Activated T-helper 2 cell treated with anti-CD3 and anti-CD28 coated beads, Interferon-gamma antibody, Interleukin-2, Interleukin-4, amounts not matched to agents 10 μg/mL and 5 μg/mL and 100 μg/mL, durations not matched to agents 14 hours and 24 hours and 36 hours (primary cell): ENCODE measurements at regions of chr17 and their contacts with region 1.

Region 1: GRCh38 chr17:48441231-48441711 is 11.3 kb upstream of the SKAP1 start:
- DNase-seq: peak; percentile 58
- H3K4me3 Mint-ChIP-seq: peak overlapping the region; percentile 24
- H3K27ac Mint-ChIP-seq: peak overlapping the region; percentile 79
- H3K4me1 Mint-ChIP-seq: peaks cover 82% of the 10 kb centered on the region
- H3K27me3 Mint-ChIP-seq: no peaks in the 10 kb centered on the region

Region 2: DNA sequence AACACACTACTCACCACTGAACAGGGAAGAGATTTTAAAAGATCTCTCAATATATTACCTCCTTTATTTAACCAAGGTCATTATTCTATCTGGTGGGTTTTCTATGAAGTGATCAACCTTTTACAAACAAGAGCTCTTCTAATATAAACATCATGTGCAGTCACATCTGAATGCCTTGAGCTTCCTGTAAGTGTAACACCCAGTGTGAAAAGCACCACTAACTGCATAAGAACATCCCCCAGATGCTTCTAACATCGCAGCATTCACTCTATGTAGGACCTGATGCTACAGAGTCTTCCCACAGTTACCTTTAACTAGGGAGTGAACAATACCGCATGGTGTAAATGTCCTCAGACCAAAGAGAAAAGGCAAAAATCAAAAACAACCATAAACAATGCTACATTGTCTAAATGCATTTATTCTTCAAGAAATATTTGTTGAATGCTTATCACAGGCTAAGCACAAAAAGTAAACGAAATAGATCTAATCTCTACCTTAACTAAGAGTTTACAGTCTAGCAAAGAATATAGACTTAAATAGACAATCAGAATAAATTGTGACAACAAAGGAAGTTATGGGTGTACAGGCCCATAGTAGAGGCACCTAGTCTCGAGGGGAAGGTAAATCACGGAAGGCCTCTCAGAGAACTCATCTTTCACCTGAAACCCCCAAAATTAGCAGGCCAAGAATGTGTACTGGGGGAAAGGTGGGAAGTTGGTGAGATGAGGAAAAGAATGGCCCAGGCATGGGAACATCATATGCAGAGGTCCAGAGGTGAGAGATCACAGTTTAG is 27.5 kb before region 1 on chr17:
- intact Hi-C with region 1: loop called (anchors 2 kb)
- DNase-seq: no peak
- H3K4me3 Mint-ChIP-seq: peak overlapping the region; percentile 19
- H3K27ac Mint-ChIP-seq: peak overlapping the region; percentile 86
- H3K4me1 Mint-ChIP-seq: peaks cover 66% of the 10 kb centered on the region
- H3K27me3 Mint-ChIP-seq: no peaks in the 10 kb centered on the region

Region 3: DNA sequence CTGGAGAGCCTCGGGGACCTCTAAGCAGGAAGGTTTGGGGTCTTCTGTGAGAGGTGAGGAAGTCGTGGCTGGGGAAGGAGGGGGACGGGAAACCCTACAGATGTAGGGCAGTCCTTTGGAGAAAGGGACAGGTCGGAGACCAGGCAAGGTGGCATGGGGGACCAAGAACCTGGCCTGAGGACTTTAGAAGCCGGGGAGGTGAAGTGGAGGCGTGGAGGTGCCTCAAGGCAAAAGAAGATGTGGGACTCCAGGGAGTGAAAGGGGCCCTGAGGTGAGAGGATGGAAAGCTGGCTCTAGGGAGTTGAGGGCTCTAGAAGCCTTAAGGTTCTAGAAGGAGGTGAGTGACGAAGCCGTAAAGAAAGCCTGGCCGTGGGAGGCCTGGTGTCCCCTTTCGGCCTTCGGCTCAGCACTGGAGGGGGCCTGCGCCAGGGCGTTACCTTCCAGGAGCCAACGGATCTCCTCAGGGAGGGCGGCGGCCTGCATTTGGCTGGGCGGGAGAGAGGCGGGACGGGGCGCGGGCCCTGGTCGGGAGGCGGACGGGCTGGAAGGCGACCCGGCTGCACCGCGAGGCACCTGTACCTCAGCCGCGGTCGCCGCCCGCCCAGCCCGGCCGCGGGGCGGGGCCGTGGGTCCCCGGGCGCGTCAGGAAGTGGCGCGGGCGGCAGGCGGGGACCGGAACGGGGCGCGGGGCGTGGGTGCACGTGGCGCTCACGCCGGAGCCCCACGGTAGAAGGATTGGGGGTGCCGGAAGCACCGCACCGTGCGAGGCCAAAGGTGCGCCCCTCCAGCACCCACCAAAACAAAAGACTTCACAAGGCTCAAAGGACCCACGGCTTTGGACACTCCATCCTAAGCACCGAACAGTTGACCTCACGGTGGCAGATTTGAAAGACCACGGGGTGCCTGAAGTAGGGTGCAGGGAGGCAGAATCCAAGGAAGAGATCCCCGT is 11.4 kb before region 1 on chr17 and contains the start of gene SKAP1:
- intact Hi-C with region 1: loop called (anchors 1 kb)
- DNase-seq: peak; percentile 68
- H3K4me3 Mint-ChIP-seq: peak within 1 kb of the TSS; percentile 97
- H3K27ac Mint-ChIP-seq: peak within 1 kb of the TSS; percentile 93
- H3K4me1 Mint-ChIP-seq: peaks cover 65% of the 10 kb centered on the region
- H3K27me3 Mint-ChIP-seq: no peaks in the 10 kb centered on the region
- total RNA-seq, gene SKAP1: 60.5 and 67.9 TPM in 2 replicates

Region 4: GRCh38 chr17:48483471-48484131 is 42.3 kb after region 1 on chr17:
- intact Hi-C with region 1: loop called (anchors 2 kb)
- DNase-seq: peak; percentile 33
- H3K4me3 Mint-ChIP-seq: no peak overlapping the region
- H3K27ac Mint-ChIP-seq: peak overlapping the region; percentile 18
- H3K4me1 Mint-ChIP-seq: peaks cover 40% of the 10 kb centered on the region
- H3K27me3 Mint-ChIP-seq: no peaks in the 10 kb centered on the region

Region 5: DNA sequence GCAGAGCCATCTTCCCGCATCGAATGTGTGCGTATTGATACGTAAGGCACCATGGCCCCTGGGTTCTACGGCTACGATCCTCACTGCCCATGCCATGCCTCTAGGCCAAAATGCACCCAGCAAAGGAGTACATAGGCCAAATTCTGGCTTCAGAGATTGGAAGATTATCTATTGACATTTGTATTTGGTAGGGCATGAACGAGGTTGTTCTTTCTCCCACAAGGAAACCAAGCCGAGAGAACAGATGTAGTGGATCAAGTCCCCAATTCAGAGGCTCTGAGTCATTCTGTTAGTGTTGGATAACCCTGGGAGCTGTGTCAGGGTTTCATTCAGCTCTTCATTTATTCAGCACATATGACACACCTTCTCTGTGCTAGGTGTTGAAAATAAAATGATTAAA is 53.1 kb after region 1 on chr17:
- intact Hi-C with region 1: no loop called
- DNase-seq: no peak
- H3K4me3 Mint-ChIP-seq: no peak overlapping the region
- H3K27ac Mint-ChIP-seq: no peak overlapping the region
- H3K4me1 Mint-ChIP-seq: peaks cover 26% of the 10 kb centered on the region
- H3K27me3 Mint-ChIP-seq: peaks cover 33% of the 10 kb centered on the region